ENCODE measurements at regions of chr2 and their contacts with region 1.

Region 1: GRCh38 chr2:102436323-102436722 is 13.4 kb downstream of the IL18RAP start:
- DNase-seq: no peak
- ATAC-seq: peak; percentile 49
- H3K4me3 ChIP-seq: peak overlapping the region; percentile 40; the same call in 1 of the 2 replicates
- H3K27ac ChIP-seq: peak overlapping the region; percentile 76
- H3K4me1 ChIP-seq: peaks cover 21% of the 10 kb centered on the region
- H3K27me3 ChIP-seq: no peaks in the 10 kb centered on the region
- CTCF ChIP-seq: no peak
- EP300 ChIP-seq: no peak
- POLR2A ChIP-seq: no peak
- RAD21 ChIP-seq: no peak

Region 2: DNA sequence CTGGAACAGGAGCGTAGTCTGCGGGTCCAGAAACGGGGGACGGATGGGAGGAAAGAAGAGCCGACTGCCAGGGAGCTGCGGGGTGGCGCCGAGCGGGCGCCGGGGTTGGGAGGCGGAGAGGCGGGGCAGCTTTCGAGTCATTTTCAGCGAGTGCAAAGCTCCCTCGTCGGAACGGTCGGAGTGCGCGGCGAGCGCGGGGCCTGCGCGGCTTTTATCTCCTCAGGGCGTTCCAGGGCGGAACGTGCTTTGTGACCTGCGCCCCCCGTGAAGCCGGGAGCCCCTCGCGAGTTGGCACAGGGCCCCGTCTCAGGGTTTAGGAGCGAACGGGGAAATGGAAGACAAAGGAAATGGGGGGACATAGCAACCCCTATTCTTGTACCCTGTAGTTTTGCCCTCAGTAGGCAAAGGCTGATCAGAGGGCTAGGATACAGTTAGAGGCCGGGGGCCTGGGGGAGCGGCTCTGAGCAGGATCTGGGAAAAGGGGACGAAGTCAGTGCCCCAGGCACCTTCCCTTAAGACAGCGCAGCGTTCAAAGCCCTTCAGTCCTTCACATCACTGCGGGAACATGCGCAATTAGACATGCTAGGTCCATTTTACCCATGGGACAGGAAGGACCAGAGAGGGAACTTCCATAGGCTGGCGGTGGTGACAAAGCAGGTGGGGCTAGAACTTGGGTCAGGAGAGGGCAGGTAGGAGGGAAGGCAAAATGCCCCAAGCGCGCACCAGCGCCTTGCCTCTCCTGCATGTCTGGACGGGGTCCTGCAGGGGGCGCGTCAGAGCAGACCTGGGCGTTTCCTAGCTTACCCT is 185.1 kb before region 1 on chr2:
- CTCF ChIA-PET with region 1: interaction called, 83 read pairs
- POLR2A ChIA-PET with region 1: no interaction called
- RAD21 ChIA-PET with region 1: interaction called, 4 read pairs
- SMC1A ChIA-PET with region 1: interaction called, 3 read pairs
- in situ Hi-C with region 1: loop called (anchors 5 kb)
- intact Hi-C with region 1: no loop called
- DNase-seq: no peak
- ATAC-seq: peak; percentile 80
- H3K4me3 ChIP-seq: no peak overlapping the region
- H3K27ac ChIP-seq: no peak overlapping the region
- H3K4me1 ChIP-seq: no peaks in the 10 kb centered on the region
- H3K27me3 ChIP-seq: no peaks in the 10 kb centered on the region; a peak in 1 of 4 replicates
- CTCF ChIP-seq: peak; percentile 58 to 63 (median 60)
- EP300 ChIP-seq: no peak
- POLR2A ChIP-seq: no peak
- RAD21 ChIP-seq: 0 out of 2 replicates have a peak, but pooled peaks have one; percentile 25

Region 3: DNA sequence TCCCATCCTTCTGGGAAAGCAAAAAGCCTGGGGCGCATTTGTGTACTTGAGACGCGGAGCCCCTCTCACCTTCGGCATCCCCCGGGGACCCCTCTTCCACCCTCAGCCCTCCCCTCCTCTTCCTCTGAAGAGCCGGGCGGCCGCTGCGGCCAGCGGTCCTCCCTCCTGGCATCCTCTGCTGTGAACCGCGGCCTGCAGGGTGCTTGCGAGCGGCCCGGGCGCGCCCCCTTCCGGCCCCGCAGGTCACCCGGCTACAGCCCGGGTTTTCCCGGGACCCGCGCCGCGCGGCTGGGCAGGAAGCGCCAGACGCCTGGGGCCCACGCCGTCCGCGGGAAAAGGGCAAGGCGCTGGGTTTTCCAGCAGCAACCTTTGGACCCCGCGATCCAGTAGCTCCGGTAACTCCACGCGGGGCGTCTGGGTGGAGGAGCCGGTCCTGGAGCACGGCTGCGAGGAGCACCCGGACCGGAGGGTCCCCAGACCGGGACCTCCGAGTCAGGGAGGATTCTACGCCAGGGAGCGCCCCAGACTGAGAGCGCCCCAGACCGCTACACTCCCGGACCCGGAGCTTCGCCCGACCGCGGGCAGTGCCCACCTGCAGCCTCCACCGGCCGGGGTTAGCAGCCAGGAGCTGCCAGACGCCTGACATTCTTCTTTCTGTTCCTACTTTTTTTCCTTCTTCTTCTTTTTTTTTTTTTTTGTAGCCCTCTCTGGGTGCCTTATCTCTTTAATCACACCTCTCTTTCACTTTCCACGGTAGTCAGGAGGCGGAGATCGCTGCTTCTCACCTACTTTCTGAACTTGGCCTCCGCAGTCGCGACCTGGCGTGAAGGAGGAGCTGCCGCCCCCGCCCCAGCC is 80.6 kb before region 1 on chr2 and contains the start of gene IL18R1:
- CTCF ChIA-PET with region 1: interaction called, 34 read pairs
- POLR2A ChIA-PET with region 1: interaction called, 7 read pairs
- RAD21 ChIA-PET with region 1: interaction called, 8 read pairs
- SMC1A ChIA-PET with region 1: interaction called, 8 read pairs
- in situ Hi-C with region 1: no loop called
- intact Hi-C with region 1: no loop called
- DNase-seq: peak; percentile 42
- ATAC-seq: peak; percentile 88
- H3K4me3 ChIP-seq: peak within 1 kb of the TSS; percentile 96
- H3K27ac ChIP-seq: peak within 1 kb of the TSS; percentile 91
- H3K4me1 ChIP-seq: peaks cover 4% of the 10 kb centered on the region
- H3K27me3 ChIP-seq: no peaks in the 10 kb centered on the region
- CTCF ChIP-seq: peak; percentile 72 to 91 (median 82)
- EP300 ChIP-seq: no peak
- POLR2A ChIP-seq: no peak
- RAD21 ChIP-seq: peak; percentile 76
- polyA plus RNA-seq, gene IL18R1: 3.5 to 3.8 TPM

Region 4: GRCh38 chr2:102366406-102367112 is 69.8 kb before region 1 on chr2:
- CTCF ChIA-PET with region 1: no interaction called
- POLR2A ChIA-PET with region 1: no interaction called
- RAD21 ChIA-PET with region 1: interaction called, 3 read pairs
- SMC1A ChIA-PET with region 1: interaction called, 5 read pairs
- in situ Hi-C with region 1: no loop called
- intact Hi-C with region 1: loop called (anchors 1 kb)
- DNase-seq: peak; percentile 91
- ATAC-seq: peak; percentile 79
- H3K4me3 ChIP-seq: no peak overlapping the region
- H3K27ac ChIP-seq: peak overlapping the region; percentile 93
- H3K4me1 ChIP-seq: peaks cover 23% of the 10 kb centered on the region
- H3K27me3 ChIP-seq: no peaks in the 10 kb centered on the region
- CTCF ChIP-seq: no peak
- EP300 ChIP-seq: peak in 1 of 2 experiments; percentile 45; a peak in 2 of 4 replicates
- POLR2A ChIP-seq: no peak
- RAD21 ChIP-seq: peak; percentile 8; the same call in 1 of the 2 replicates

Region 5: GRCh38 chr2:102418421-102418961 is 17.8 kb before region 1 on chr2:
- CTCF ChIA-PET with region 1: interaction called, 5 read pairs
- POLR2A ChIA-PET with region 1: interaction called, 4 read pairs
- RAD21 ChIA-PET with region 1: interaction called, 4 read pairs
- SMC1A ChIA-PET with region 1: interaction called, 10 read pairs
- in situ Hi-C with region 1: no loop called
- intact Hi-C with region 1: loop called (anchors 2 kb)
- DNase-seq: no peak
- ATAC-seq: peak; percentile 84
- H3K4me3 ChIP-seq: no peak overlapping the region
- H3K27ac ChIP-seq: 0 out of 2 replicates have a peak overlapping the region, but pooled peaks have one; percentile 1
- H3K4me1 ChIP-seq: peaks cover 22% of the 10 kb centered on the region; the same call in 1 of the 2 replicates
- H3K27me3 ChIP-seq: no peaks in the 10 kb centered on the region
- CTCF ChIP-seq: no peak
- EP300 ChIP-seq: no peak
- POLR2A ChIP-seq: no peak
- RAD21 ChIP-seq: no peak

Region 6: GRCh38 chr2:102424754-102425153 is 11.6 kb before region 1 on chr2:
- CTCF ChIA-PET with region 1: interaction called, 5 read pairs
- POLR2A ChIA-PET with region 1: interaction called, 4 read pairs
- RAD21 ChIA-PET with region 1: interaction called, 5 read pairs
- SMC1A ChIA-PET with region 1: interaction called, 24 read pairs
- in situ Hi-C with region 1: no loop called
- intact Hi-C with region 1: loop called (anchors 2 kb)
- DNase-seq: peak; percentile 61
- ATAC-seq: peak; percentile 91
- H3K4me3 ChIP-seq: no peak overlapping the region
- H3K27ac ChIP-seq: peak overlapping the region; percentile 62; the same call in 1 of the 2 replicates
- H3K4me1 ChIP-seq: peaks cover 32% of the 10 kb centered on the region
- H3K27me3 ChIP-seq: no peaks in the 10 kb centered on the region
- CTCF ChIP-seq: no peak
- EP300 ChIP-seq: peak in 1 of 2 experiments; percentile 75; a peak in 1 of 4 replicates
- POLR2A ChIP-seq: no peak
- RAD21 ChIP-seq: no peak

Measured in GM12878 (cell line).